Mammary epithelial cell (primary cell): ENCODE measurements at regions of chr21 and their contacts with region 1.

Region 1: DNA sequence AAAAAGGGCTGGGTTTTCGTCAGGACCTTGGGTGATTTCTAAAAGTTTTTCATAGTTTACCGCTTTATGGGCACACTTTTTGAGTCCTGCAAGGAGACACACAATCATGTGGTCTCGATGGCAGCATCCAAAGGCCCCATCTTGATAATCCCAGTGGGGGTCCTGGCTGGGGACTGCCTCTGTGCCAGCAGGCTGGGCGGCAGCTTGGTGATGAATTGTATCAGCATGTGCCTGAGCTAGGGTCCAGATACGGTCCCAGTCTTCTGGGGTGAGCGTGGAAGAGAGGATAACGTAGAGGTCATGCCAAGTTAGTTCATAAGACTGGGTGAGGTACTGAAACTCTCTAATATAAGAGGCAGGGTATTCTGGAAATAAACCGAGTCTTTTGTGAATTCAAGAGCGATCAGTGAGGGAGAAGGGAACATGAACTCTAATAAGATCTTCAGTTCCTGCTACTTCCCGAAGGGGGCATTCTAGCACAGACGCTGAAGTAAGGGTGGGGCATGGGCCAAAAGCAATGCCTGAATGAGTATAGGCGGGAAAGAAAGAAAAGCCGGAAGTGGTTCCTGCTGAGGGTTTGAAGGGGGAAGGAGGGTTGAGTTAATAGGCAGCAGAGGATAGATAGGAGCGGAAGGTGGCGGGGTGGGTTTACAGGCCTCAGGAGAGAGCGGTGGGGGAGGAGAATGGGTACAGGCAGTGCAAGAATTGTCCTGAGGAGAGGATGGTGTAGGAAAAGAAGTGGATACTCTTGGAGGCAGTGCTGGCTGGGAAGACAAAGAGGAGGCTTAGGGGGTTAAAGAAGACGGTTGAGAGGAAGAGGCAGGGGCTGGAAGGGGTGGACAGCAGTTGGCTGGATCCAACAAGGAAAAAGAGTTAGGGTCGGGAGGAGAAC is 1.6 kb downstream of the ERVH48-1 start:
- DNase-seq: peak; percentile 78
- H3K4me3 ChIP-seq: no peak overlapping the region
- H3K27ac ChIP-seq: no peak overlapping the region
- H3K4me1 ChIP-seq: peaks cover 5% of the 10 kb centered on the region
- H3K27me3 ChIP-seq: no peaks in the 10 kb centered on the region
- CTCF ChIP-seq: peak; percentile 75 to 80

Region 2: DNA sequence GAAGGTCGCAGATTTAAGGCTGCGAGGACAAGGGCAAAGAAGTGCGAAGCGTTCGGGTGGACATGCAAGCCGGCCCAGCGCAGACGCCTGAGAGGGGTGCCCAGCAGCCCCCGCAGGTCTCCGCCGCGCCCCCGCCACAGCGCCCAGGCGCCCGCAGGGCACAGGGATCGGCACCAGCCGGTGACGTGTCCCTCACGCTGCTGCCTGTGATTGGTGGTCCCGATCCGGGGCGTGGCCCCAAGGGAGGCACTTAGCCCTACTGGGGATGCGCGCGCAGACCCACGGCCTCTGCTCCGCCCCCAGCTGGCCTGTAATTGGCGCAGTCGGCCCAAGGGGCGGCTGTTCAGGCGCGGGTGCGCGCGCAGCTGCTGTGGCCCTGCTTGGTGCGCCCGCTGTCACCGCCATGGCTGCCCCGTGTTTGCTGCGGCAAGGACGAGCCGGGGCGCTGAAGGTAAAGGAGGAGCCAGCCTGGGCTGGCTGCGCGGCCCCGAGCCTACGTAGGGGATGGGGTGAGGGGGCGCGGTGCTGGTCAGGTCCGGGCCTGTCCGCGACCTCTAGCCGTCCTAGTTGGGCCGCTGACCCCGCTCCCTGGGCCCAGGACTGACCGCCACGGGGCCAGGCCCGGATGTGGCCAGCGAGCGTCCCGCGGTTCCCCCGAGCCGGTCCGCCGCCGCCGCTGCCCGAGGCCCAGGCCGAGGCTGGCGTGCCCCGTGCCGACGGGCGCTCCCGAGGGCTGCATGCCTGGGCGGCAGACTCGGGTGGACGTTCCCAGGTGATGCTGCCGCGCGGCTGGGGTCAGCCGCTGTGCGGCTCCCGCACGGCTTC is 30.6 kb before region 1 on chr21 and contains the start of gene NDUFV3:
- CTCF ChIA-PET with region 1: no interaction called
- dilution Hi-C with region 1: loop called (anchors 5 kb)
- in situ Hi-C with region 1: no loop called
- intact Hi-C with region 1: no loop called
- DNase-seq: peak; percentile 98
- H3K4me3 ChIP-seq: peak within 1 kb of the TSS; percentile 74 to 88 (median 76)
- H3K27ac ChIP-seq: peak within 1 kb of the TSS; percentile 97
- H3K4me1 ChIP-seq: peaks cover 8% of the 10 kb centered on the region
- H3K27me3 ChIP-seq: no peaks in the 10 kb centered on the region
- CTCF ChIP-seq: no peak
- total RNA-seq, gene NDUFV3: 36.3 to 50.3 TPM

Region 3: DNA sequence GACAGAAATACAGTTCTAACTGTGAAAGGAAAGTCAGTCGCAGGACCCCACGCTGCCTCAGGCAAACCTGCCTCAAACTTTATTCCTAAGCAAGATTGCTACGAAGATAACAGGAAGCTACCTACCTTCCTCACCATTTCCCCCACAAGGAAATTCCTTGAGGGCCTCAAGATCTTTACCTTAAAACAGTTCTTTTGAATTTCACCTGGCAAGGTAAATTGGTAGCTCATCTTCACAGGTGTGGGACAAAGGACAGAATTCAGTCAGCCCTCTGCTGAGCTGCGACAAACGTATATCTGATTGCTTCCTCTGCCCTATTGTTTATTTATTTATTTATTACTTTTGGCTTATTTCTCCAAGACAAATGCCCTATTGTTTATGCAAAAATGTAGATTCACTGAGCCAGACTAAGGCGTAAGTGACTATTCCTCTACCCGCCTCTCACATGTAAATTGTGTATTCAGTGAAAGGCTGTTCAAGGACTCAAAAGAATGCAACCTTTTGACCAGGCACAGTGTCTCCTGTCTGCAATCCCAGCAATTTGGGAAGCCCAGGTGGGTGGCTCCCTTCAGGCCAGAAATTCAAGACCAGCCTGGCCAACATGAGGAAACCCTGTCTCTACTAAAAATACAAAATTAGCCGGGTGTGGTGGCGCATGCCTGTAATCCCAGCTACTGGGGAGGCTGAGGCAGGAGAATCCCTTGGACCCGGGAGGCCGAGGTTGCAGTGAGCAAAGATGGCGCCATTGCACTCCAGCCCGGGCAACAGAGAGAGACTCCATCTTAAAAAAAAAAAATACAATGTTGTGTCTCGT is 33.2 kb after region 1 on chr21:
- CTCF ChIA-PET with region 1: no interaction called
- dilution Hi-C with region 1: no loop called
- in situ Hi-C with region 1: no loop called
- intact Hi-C with region 1: loop called (anchors 1 kb)
- DNase-seq: no peak
- H3K4me3 ChIP-seq: no peak overlapping the region
- H3K27ac ChIP-seq: no peak overlapping the region
- H3K4me1 ChIP-seq: peaks cover 23% of the 10 kb centered on the region
- H3K27me3 ChIP-seq: no peaks in the 10 kb centered on the region
- CTCF ChIP-seq: no peak

Region 4: DNA sequence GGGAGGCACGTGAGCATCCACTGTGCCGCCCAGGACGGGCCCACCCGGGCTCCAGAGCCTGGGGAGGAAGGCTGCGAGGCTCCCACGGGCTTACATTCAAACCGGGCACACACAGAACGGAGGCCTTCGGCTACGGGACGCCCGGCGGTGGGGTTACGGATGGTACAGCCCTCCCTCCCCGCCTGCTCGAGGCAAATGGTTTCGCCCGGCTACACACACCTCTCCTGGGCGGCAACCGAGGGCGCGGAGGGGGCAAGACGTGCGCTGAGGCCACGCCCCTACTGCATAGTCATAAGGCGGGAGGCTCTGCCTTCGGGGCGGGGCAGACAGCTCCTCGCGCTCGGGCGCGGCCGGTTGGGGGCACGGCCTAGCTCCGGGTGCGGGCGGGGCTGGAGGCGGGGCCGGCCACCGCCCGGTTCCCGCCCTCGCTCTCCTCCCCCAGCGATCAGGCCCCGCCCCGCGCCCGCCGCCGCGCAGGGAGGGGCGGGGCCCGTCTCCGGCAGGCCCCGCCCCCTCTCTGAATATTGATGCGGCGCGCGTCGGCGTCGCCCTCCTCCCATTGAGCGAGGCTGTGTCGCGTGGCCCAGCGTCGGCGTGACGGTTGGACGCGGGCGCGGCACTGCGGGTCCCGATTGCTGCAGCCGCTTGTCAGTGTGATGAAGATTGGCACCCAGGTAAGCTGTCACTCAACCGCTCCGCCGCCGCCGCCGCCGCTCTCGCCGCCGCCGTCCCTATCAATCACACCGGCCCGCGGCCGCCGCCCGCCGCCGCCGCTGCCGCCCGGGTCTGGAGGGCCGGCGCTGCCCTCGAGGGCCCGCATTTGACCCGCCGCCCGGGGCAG is 50.4 kb after region 1 on chr21 and contains the start of gene PKNOX1:
- CTCF ChIA-PET with region 1: no interaction called
- dilution Hi-C with region 1: no loop called
- in situ Hi-C with region 1: loop called in 1 of 2 experiments (anchors 10 kb)
- intact Hi-C with region 1: loop called (anchors 1 kb)
- DNase-seq: peak; percentile 98
- H3K4me3 ChIP-seq: peak within 1 kb of the TSS; percentile 84 to 91 (median 90)
- H3K27ac ChIP-seq: peak within 1 kb of the TSS; percentile 86
- H3K4me1 ChIP-seq: peaks cover 17% of the 10 kb centered on the region
- H3K27me3 ChIP-seq: no peaks in the 10 kb centered on the region
- CTCF ChIP-seq: no peak
- total RNA-seq, gene PKNOX1: 13.3 to 18.3 TPM

Region 5: GRCh38 chr21:43646550-43647260 is 722.9 kb after region 1 on chr21:
- CTCF ChIA-PET with region 1: no interaction called
- dilution Hi-C with region 1: no loop called
- in situ Hi-C with region 1: no loop called
- intact Hi-C with region 1: loop called (anchors 1 kb)
- DNase-seq: peak; percentile 87
- H3K4me3 ChIP-seq: no peak overlapping the region
- H3K27ac ChIP-seq: peak overlapping the region; percentile 44
- H3K4me1 ChIP-seq: peaks cover 19% of the 10 kb centered on the region
- H3K27me3 ChIP-seq: no peaks in the 10 kb centered on the region
- CTCF ChIP-seq: peak; percentile 99

Region 6: GRCh38 chr21:43783101-43783700 is 859.4 kb after region 1 on chr21:
- CTCF ChIA-PET with region 1: interaction called, 15 read pairs
- dilution Hi-C with region 1: no loop called
- in situ Hi-C with region 1: no loop called
- intact Hi-C with region 1: no loop called
- DNase-seq: no peak
- H3K4me3 ChIP-seq: no peak overlapping the region
- H3K27ac ChIP-seq: no peak overlapping the region
- H3K4me1 ChIP-seq: peaks cover 17% of the 10 kb centered on the region
- H3K27me3 ChIP-seq: no peaks in the 10 kb centered on the region
- CTCF ChIP-seq: no peak